Mucosa of descending colon (tissue), 3 donors: ENCODE measurements at regions of chr18 and their contacts with region 1.

Region 1: GRCh38 chr18:55861266-55861665 is 273.3 kb upstream of the TCF4 start:
- DNase-seq: no peak
- ATAC-seq: no peak
- H3K4me3 ChIP-seq: no peak overlapping the region
- H3K4me1 ChIP-seq: no peaks in the 10 kb centered on the region
- CTCF ChIP-seq: no peak

Region 2: GRCh38 chr18:56563568-56563967 is 702.3 kb after region 1 on chr18:
- intact Hi-C with region 1: loop called in 1 of 2 experiments (anchors 10 kb)
- DNase-seq: no peak
- ATAC-seq: no peak
- H3K4me3 ChIP-seq: no peak overlapping the region
- H3K4me1 ChIP-seq: no peaks in the 10 kb centered on the region
- CTCF ChIP-seq: no peak